ENCODE measurements at regions of chr21 and their contacts with region 1.

Region 1: DNA sequence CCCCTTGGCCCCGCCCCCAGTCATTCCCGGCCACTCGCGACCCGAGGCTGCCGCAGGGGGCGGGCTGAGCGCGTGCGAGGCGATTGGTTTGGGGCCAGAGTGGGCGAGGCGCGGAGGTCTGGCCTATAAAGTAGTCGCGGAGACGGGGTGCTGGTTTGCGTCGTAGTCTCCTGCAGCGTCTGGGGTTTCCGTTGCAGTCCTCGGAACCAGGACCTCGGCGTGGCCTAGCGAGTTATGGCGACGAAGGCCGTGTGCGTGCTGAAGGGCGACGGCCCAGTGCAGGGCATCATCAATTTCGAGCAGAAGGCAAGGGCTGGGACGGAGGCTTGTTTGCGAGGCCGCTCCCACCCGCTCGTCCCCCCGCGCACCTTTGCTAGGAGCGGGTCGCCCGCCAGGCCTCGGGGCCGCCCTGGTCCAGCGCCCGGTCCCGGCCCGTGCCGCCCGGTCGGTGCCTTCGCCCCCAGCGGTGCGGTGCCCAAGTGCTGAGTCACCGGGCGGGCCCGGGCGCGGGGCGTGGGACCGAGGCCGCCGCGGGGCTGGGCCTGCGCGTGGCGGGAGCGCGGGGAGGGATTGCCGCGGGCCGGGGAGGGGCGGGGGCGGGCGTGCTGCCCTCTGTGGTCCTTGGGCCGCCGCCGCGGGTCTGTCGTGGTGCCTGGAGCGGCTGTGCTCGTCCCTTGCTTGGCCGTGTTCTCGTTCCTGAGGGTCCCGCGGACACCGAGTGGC is at the start of gene SOD1:
- DNase-seq: peak; percentile 98
- H3K4me3 ChIP-seq: peak within 1 kb of the TSS; percentile 61 to 95 (median 82)
- H3K27ac ChIP-seq: peak within 1 kb of the TSS; percentile 87 to 93 (median 90)
- H3K4me1 ChIP-seq: peaks cover 18 to 71% (median 48%) of the 10 kb centered on the region in 6 donors
- H3K27me3 ChIP-seq: no peaks in the 10 kb centered on the region
- CTCF ChIP-seq: peak in 9 of 11 experiments; percentile 18 to 59 (median 47)
- POLR2A ChIP-seq: peak in 2 of 3 donors; percentile 69 to 89
- total RNA-seq, gene SOD1: 81.9 to 142 (median 126) TPM

Region 2: DNA sequence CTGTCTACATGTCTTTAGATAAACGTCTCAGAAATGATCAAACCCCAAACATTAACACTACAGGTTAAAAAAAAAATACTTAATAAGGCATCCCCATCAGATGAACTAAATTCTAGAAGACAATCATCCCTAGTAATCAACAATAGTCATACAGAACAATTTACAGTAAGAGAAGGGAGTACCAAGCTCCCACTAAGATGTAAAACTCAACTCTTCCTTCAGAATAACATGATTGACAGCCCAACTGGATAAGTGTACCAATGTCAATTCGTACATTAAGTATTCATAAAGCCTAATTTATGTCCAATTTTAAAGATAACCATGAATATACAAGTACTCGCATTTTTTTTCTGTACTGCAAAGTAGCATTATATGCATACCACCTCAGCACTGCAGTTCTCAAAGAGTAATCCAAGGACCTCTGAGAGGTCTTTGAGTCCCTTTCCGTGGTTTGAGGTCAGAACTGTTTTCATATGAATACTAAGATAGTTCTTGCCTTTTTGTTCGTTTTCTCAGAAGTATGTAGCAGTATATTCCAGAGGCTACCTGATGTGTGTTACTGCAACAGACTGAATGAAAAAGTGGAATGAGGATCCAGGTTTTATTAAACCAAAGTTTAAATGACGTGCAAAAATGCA is 65.6 kb after region 1 on chr21:
- intact Hi-C with region 1: loop called (anchors 10 kb)
- DNase-seq: no peak
- H3K4me3 ChIP-seq: no peak overlapping the region
- H3K27ac ChIP-seq: no peak overlapping the region
- H3K4me1 ChIP-seq: peaks cover 32 to 100% (median 92%) of the 10 kb centered on the region in 6 donors
- H3K27me3 ChIP-seq: no peaks in the 10 kb centered on the region
- CTCF ChIP-seq: no peak
- POLR2A ChIP-seq: no peak

Region 3: DNA sequence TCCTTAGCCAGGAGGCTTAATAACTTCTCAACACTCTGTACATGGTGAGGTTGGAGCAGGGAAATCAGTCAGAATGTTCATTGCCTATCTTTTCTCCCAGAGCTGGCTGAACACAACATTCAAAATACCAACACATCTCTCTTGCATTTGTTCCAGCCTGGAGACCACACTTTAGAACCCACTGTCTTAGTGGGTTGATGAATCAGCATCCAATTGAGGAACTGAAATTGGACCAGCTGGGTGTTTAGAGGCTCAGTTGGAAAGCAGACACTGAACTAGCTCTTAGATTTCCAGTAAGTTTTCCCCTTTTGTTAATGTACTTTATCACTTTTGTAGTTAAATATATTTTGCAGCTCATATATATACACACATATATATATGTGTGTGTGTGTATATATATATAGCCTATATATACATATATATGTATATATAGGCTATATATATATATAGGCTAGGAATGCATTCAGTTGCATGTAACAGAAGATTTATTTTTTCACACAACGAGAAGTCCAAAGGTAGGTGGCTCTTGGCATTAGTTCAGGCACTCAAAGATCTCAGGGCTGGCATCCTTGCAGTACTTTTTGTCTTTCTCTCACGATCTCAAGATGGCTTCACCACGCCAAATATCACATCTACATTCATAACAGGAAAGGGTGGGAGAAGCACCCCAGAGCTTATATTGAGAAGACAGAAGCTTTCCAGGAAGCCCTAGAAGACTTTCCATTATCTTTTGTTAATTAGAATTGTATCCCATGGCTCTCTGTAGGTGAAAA is 178.1 kb after region 1 on chr21:
- intact Hi-C with region 1: no loop called
- DNase-seq: no peak
- H3K4me3 ChIP-seq: no peak overlapping the region
- H3K27ac ChIP-seq: no peak overlapping the region
- H3K4me1 ChIP-seq: no peaks in the 10 kb centered on the region
- H3K27me3 ChIP-seq: peaks cover 0 to 7% (median 0%) of the 10 kb centered on the region in 7 donors
- CTCF ChIP-seq: no peak
- POLR2A ChIP-seq: no peak

Region 4: GRCh38 chr21:33566514-33566913 is 1906.8 kb after region 1 on chr21:
- intact Hi-C with region 1: no loop called
- DNase-seq: no peak
- H3K4me3 ChIP-seq: no peak overlapping the region
- H3K27ac ChIP-seq: no peak overlapping the region
- H3K4me1 ChIP-seq: peaks cover 0 to 61% (median 23%) of the 10 kb centered on the region in 6 donors
- H3K27me3 ChIP-seq: no peaks in the 10 kb centered on the region
- CTCF ChIP-seq: no peak
- POLR2A ChIP-seq: no peak

Measured in spleen (tissue), 13 donors.